PC-9 (cell line): ENCODE measurements at regions of chrX and their contacts with region 1.

Region 1: GRCh38 chrX:56113785-56114436 is 118.2 kb upstream of the KLF8 start:
- DNase-seq: peak; percentile 99 to 100
- H3K4me3 ChIP-seq: peak overlapping the region; percentile 39; the same call in 1 of the 2 replicates
- H3K27ac ChIP-seq: peak overlapping the region; percentile 84
- H3K4me1 ChIP-seq: peaks cover 34% of the 10 kb centered on the region
- H3K27me3 ChIP-seq: no peaks in the 10 kb centered on the region
- CTCF ChIP-seq: no peak

Region 2: GRCh38 chrX:55907968-55908607 is 205.8 kb before region 1 on chrX:
- CTCF ChIA-PET with region 1: no interaction called
- POLR2A ChIA-PET with region 1: no interaction called
- intact Hi-C with region 1: loop called (anchors 1 kb)
- DNase-seq: peak; percentile 72 to 78
- H3K4me3 ChIP-seq: peak overlapping the region; percentile 84
- H3K27ac ChIP-seq: peak overlapping the region; percentile 69
- H3K4me1 ChIP-seq: peaks cover 14% of the 10 kb centered on the region
- H3K27me3 ChIP-seq: no peaks in the 10 kb centered on the region
- CTCF ChIP-seq: peak; percentile 69

Region 3: DNA sequence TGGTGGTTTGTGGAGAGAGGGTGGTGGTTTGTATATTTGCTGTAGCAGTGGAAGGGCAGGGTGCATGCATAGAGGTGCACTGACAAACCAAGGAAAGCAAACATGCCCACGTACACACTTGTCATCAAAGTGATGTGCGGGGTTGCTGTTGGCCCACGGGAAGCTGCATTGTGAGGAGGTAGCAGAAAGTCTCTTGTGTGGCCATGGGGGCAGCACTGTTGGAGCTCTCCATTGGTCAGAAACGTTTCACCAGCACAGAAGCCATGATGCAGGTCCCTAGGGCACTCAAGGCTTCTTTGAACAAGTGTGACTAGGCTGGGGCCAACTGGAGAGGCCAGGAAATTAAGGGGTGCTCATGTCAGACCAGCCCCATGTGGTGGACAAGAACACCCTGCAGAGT is 56.6 kb before region 1 on chrX:
- CTCF ChIA-PET with region 1: no interaction called
- POLR2A ChIA-PET with region 1: no interaction called
- intact Hi-C with region 1: loop called (anchors 2 kb)
- DNase-seq: no peak
- H3K4me3 ChIP-seq: no peak overlapping the region
- H3K27ac ChIP-seq: no peak overlapping the region
- H3K4me1 ChIP-seq: peaks cover 7% of the 10 kb centered on the region; the same call in 1 of the 2 replicates
- H3K27me3 ChIP-seq: no peaks in the 10 kb centered on the region
- CTCF ChIP-seq: no peak

Region 4: DNA sequence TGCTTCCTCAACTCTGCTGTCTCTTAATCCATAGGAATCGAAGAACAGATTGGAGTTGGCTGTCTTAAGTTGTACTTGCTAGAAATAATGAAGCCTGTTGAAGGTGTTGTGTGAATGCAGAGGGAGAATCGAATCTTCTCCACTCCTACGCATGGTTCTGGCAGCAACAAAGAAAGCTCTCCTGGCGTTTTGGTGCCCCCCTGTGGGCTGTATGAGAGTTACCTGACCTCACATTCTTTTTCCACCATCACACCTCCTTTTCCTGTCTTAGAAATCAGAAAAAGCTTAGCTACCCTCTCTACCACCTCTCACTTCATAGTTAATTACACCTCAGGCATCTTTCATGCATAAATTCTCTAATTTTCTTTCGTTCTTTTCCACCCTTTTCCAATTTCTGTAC is 134.6 kb after region 1 on chrX:
- CTCF ChIA-PET with region 1: no interaction called
- POLR2A ChIA-PET with region 1: no interaction called
- intact Hi-C with region 1: loop called (anchors 1 kb)
- DNase-seq: peak in 1 of 2 experiments; percentile 72
- H3K4me3 ChIP-seq: no peak overlapping the region
- H3K27ac ChIP-seq: no peak overlapping the region
- H3K4me1 ChIP-seq: no peaks in the 10 kb centered on the region
- H3K27me3 ChIP-seq: no peaks in the 10 kb centered on the region
- CTCF ChIP-seq: peak; percentile 74

Region 5: GRCh38 chrX:56729152-56729850 is 615.4 kb after region 1 on chrX and contains the start of gene NBDY:
- CTCF ChIA-PET with region 1: no interaction called
- POLR2A ChIA-PET with region 1: no interaction called
- intact Hi-C with region 1: loop called (anchors 2 kb)
- DNase-seq: peak in 1 of 2 experiments; percentile 59
- H3K4me3 ChIP-seq: peak within 1 kb of the TSS; percentile 66
- H3K27ac ChIP-seq: peak within 1 kb of the TSS; percentile 43; the same call in 1 of the 2 replicates
- H3K4me1 ChIP-seq: no peaks in the 10 kb centered on the region
- H3K27me3 ChIP-seq: no peaks in the 10 kb centered on the region
- CTCF ChIP-seq: no peak
- total RNA-seq, gene NBDY: 76.6 and 99.3 TPM in 2 replicates